ENCODE measurements at regions of chr1 and their contacts with region 1.

Region 1: GRCh38 chr1:43238085-43238484 is 31.7 kb upstream of the TMEM125 start:
- DNase-seq: no peak
- ATAC-seq: peak; percentile 64
- H3K4me3 ChIP-seq: no peak overlapping the region
- H3K27ac ChIP-seq: no peak overlapping the region
- H3K4me1 ChIP-seq: peaks cover 19% of the 10 kb centered on the region
- H3K27me3 ChIP-seq: no peaks in the 10 kb centered on the region
- CTCF ChIP-seq: peak; percentile 62 to 76 (median 74)
- EP300 ChIP-seq: no peak
- POLR2A ChIP-seq: no peak
- RAD21 ChIP-seq: peak; percentile 91

Region 2: DNA sequence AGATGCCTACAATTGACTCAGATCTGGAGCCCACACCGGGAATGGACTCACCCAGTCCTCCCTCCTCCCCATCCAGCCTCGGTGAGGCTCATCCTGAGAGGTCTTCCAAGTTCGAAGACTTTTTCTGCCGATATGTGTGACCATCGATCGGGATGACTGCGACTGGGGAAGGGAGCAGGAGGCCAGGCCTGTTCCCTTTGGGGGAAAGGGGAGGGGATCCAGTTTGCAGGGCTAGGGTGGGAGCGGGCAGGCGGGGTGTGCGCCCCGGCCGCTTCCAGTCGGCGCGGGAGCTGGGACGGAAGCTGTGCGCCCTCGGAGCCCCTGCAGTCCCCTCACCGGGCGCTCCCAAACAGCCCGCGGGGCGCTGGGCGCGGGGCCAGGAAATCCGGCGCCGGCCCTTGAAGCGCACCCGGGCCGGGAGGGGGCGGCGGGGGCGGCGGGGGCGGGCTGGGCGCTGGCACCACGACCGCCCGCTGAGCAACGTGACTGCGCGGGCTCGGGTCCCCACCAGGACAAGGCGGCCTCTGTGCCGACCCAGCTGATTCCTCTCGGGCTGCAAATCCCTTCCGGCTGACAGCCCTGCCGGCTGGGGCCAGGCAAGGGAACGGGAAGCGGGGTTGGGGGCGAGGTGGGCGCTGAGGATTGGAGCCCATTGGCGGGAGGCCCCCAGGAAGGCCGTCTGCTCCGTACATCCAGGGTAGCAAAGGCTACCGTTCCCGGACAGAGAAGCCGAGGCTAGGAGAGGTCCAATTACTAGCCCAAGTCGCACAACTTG is 169.9 kb before region 1 on chr1:
- CTCF ChIA-PET with region 1: no interaction called
- POLR2A ChIA-PET with region 1: no interaction called
- RAD21 ChIA-PET with region 1: no interaction called
- SMC1A ChIA-PET with region 1: no interaction called
- in situ Hi-C with region 1: no loop called
- intact Hi-C with region 1: no loop called
- DNase-seq: no peak
- ATAC-seq: no peak; the same call in 1 of the 3 replicates
- H3K4me3 ChIP-seq: no peak overlapping the region
- H3K27ac ChIP-seq: no peak overlapping the region
- H3K4me1 ChIP-seq: peaks cover 5% of the 10 kb centered on the region; the same call in 1 of the 2 replicates
- H3K27me3 ChIP-seq: peaks cover 0 to 3% of the 10 kb centered on the region in 2 experiments; a peak in 1 of 4 replicates
- CTCF ChIP-seq: no peak
- EP300 ChIP-seq: no peak
- POLR2A ChIP-seq: no peak
- RAD21 ChIP-seq: no peak

Region 3: GRCh38 chr1:43293896-43294760 is 56.0 kb after region 1 on chr1:
- CTCF ChIA-PET with region 1: interaction called, 19 read pairs
- POLR2A ChIA-PET with region 1: interaction called, 11 read pairs
- RAD21 ChIA-PET with region 1: interaction called, 30 read pairs
- SMC1A ChIA-PET with region 1: interaction called, 40 read pairs
- in situ Hi-C with region 1: no loop called
- intact Hi-C with region 1: loop called (anchors 2 kb)
- DNase-seq: no peak
- ATAC-seq: no peak
- H3K4me3 ChIP-seq: no peak overlapping the region
- H3K27ac ChIP-seq: no peak overlapping the region
- H3K4me1 ChIP-seq: peaks cover 13% of the 10 kb centered on the region
- H3K27me3 ChIP-seq: no peaks in the 10 kb centered on the region
- CTCF ChIP-seq: no peak
- EP300 ChIP-seq: no peak
- POLR2A ChIP-seq: no peak
- RAD21 ChIP-seq: no peak

Region 4: DNA sequence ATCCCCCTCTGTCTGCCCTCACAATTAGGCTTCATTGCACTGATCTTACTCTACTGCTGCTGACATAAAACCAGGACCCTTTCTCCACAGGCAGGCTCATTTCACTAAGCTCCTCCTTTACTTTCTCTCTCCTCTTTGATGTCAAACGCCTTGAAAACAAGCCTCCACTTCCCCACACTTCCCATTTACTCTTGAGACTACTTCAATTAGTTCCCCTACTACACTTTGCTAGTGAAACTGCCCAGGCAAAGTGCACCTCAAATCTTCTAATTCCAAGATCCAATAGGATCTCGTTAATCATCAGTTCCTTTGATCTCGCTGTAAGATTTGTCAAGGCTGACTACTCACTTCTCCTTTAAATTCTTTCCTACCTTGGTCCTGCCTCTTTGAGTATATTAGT is 114.8 kb after region 1 on chr1:
- CTCF ChIA-PET with region 1: interaction called, 44 read pairs
- POLR2A ChIA-PET with region 1: interaction called, 19 read pairs
- RAD21 ChIA-PET with region 1: interaction called, 49 read pairs
- SMC1A ChIA-PET with region 1: interaction called, 23 read pairs
- in situ Hi-C with region 1: no loop called
- intact Hi-C with region 1: loop called (anchors 2 kb)
- DNase-seq: no peak
- ATAC-seq: no peak
- H3K4me3 ChIP-seq: no peak overlapping the region
- H3K27ac ChIP-seq: no peak overlapping the region
- H3K4me1 ChIP-seq: no peaks in the 10 kb centered on the region
- H3K27me3 ChIP-seq: no peaks in the 10 kb centered on the region
- CTCF ChIP-seq: no peak
- EP300 ChIP-seq: no peak
- POLR2A ChIP-seq: no peak
- RAD21 ChIP-seq: no peak

Region 5: DNA sequence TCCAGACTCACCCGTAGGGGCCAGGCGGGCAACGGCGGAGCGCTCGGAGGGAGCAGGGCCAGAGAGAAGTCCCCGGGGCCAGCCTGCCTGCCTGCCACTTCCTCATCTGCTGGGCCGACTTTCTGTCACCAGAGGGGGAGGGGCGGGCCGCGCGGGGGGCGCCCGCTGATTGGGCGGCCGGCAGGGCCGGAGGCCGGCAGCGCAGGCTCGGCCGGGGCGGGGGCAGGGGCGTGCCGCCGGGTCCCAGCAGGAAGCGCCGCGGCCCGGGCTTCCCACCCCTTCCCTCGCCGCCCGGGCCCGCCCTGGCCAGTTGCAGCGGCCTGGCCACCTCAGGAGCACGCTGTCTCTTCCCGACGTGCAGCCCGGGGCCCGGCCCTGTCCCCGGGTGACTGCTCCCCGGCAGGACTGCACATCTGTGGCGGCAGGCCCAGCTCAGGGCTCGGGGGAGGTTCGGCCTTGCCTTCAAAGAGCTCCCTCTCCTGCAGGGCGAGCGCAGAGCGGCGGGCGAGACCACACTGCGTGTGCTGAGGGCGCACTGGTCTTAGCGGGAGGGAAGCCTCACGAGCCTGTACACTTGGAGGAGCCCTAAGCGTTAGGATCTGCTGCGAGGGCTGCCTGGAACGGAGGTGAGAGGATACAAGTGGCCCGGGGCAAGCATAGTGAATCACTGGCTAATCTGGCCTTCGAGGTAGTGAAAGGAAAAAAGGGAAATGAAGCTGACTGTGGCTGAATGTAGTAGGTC is 130.0 kb after region 1 on chr1 and contains the start of gene ELOVL1:
- CTCF ChIA-PET with region 1: interaction called, 16 read pairs
- POLR2A ChIA-PET with region 1: interaction called, 13 read pairs
- RAD21 ChIA-PET with region 1: interaction called, 7 read pairs
- SMC1A ChIA-PET with region 1: interaction called, 24 read pairs
- in situ Hi-C with region 1: no loop called
- intact Hi-C with region 1: no loop called
- DNase-seq: peak; percentile 41
- ATAC-seq: peak; percentile 89
- H3K4me3 ChIP-seq: peak within 1 kb of the TSS; percentile 100
- H3K27ac ChIP-seq: peak within 1 kb of the TSS; percentile 95
- H3K4me1 ChIP-seq: peaks cover 8% of the 10 kb centered on the region
- H3K27me3 ChIP-seq: no peaks in the 10 kb centered on the region
- CTCF ChIP-seq: peak in 2 of 3 experiments; percentile 24 to 43; a peak in 4 of 6 replicates
- EP300 ChIP-seq: no peak
- POLR2A ChIP-seq: peak; percentile 94
- RAD21 ChIP-seq: no peak
- polyA plus RNA-seq, gene ELOVL1: 62.7 to 68.4 TPM

Region 6: DNA sequence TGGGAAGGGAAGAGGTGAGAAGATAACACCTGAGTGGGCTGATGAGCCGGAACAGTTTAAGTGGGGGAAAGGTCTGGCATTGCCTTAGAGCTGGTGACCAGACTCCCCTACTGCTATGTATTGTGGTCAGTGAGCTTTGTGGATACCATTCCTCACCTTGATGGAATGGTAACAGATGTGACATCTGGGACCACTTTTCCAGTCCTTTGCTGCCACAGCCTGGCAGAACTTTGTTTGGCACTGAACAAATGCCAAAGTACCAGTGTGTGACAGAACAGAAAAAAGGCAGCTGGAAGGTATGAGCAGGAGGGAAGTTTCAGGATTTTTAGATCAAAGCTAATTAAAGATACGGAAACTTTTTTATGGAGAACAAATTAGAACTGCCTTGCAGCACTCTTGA is 145.4 kb after region 1 on chr1:
- CTCF ChIA-PET with region 1: interaction called, 5 read pairs
- POLR2A ChIA-PET with region 1: no interaction called
- RAD21 ChIA-PET with region 1: interaction called, 19 read pairs
- SMC1A ChIA-PET with region 1: interaction called, 14 read pairs
- in situ Hi-C with region 1: no loop called
- intact Hi-C with region 1: no loop called
- DNase-seq: no peak
- ATAC-seq: no peak
- H3K4me3 ChIP-seq: no peak overlapping the region
- H3K27ac ChIP-seq: no peak overlapping the region
- H3K4me1 ChIP-seq: peaks cover 10% of the 10 kb centered on the region
- H3K27me3 ChIP-seq: no peaks in the 10 kb centered on the region
- CTCF ChIP-seq: peak in 1 of 3 experiments; percentile 32; a peak in 2 of 6 replicates
- EP300 ChIP-seq: no peak
- POLR2A ChIP-seq: no peak
- RAD21 ChIP-seq: 0 out of 2 replicates have a peak, but pooled peaks have one; percentile 11

Region 7: DNA sequence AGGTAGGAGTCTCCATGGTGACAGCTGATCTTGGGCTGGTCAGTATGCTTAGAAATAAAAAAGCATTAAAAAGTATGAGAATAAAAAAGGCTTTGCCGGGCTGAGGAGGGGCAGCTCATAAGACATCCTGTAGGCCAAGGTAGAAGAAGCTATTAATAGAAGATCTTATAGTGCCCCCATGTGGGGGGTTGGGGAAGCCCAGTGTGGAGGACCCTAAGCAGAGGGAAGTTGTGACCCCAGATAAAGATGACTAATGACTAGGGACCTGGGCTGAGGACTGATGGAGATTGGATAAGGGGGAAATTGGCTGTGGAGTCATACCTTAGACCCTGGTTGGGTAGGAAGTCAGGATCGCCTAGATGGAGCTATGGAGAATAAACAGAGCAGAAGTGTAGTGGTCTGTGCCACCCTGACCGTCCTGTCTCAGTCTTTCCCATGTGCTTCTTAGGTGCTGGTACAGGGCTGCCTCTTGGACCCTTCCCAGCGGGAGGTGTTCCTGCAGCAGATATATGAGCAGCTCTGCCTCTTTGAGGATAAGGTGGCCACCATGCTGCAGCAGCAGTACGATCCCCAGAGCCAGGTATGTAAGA is 176.6 kb after region 1 on chr1:
- CTCF ChIA-PET with region 1: interaction called, 89 read pairs
- POLR2A ChIA-PET with region 1: no interaction called
- RAD21 ChIA-PET with region 1: interaction called, 52 read pairs
- SMC1A ChIA-PET with region 1: interaction called, 70 read pairs
- in situ Hi-C with region 1: no loop called
- intact Hi-C with region 1: no loop called
- DNase-seq: no peak
- ATAC-seq: peak; percentile 90
- H3K4me3 ChIP-seq: no peak overlapping the region
- H3K27ac ChIP-seq: no peak overlapping the region
- H3K4me1 ChIP-seq: peaks cover 7% of the 10 kb centered on the region
- H3K27me3 ChIP-seq: no peaks in the 10 kb centered on the region
- CTCF ChIP-seq: peak; percentile 54 to 57 (median 55)
- EP300 ChIP-seq: no peak
- POLR2A ChIP-seq: no peak
- RAD21 ChIP-seq: peak; percentile 67

Region 8: GRCh38 chr1:43435146-43436145 is 197.4 kb after region 1 on chr1:
- CTCF ChIA-PET with region 1: no interaction called
- POLR2A ChIA-PET with region 1: no interaction called
- RAD21 ChIA-PET with region 1: no interaction called
- SMC1A ChIA-PET with region 1: no interaction called
- in situ Hi-C with region 1: no loop called
- intact Hi-C with region 1: no loop called
- DNase-seq: no peak
- ATAC-seq: no peak
- H3K4me3 ChIP-seq: no peak overlapping the region
- H3K27ac ChIP-seq: no peak overlapping the region
- H3K4me1 ChIP-seq: no peaks in the 10 kb centered on the region
- H3K27me3 ChIP-seq: no peaks in the 10 kb centered on the region
- CTCF ChIP-seq: no peak
- EP300 ChIP-seq: no peak
- POLR2A ChIP-seq: no peak
- RAD21 ChIP-seq: no peak

Measured in GM12878 (cell line).